Naive thymus-derived CD4-positive, alpha-beta T cell (primary cell): ENCODE measurements at regions of chr11 and their contacts with region 1.

Region 1: GRCh38 chr11:128412847-128413791 is 174.2 kb downstream of the ETS1 start:
- DNase-seq: no peak
- ATAC-seq: no peak
- H3K4me3 ChIP-seq: no peak overlapping the region
- H3K4me3 Mint-ChIP-seq: peak overlapping the region in 6 of 10 donors; percentile 12 to 69 (median 58)
- H3K27ac ChIP-seq: no peak overlapping the region
- H3K27ac Mint-ChIP-seq: peak overlapping the region; percentile 30 to 95 (median 82)
- H3K4me1 ChIP-seq: peaks cover 0 to 37% of the 10 kb centered on the region in 2 donors
- H3K4me1 Mint-ChIP-seq: peaks cover 23 to 85% (median 77%) of the 10 kb centered on the region in 7 donors
- H3K27me3 ChIP-seq: no peaks in the 10 kb centered on the region
- H3K27me3 Mint-ChIP-seq: no peaks in the 10 kb centered on the region

Region 2: GRCh38 chr11:128365044-128365443 is 48.1 kb before region 1 on chr11:
- CTCF ChIA-PET with region 1: no interaction called
- POLR2A ChIA-PET with region 1: no interaction called
- intact Hi-C with region 1: loop called in 1 of 2 experiments (anchors 2 kb)
- DNase-seq: peak in 5 of 9 donors; percentile 17 to 48 (median 45)
- ATAC-seq: no peak
- H3K4me3 ChIP-seq: no peak overlapping the region
- H3K4me3 Mint-ChIP-seq: no peak overlapping the region
- H3K27ac ChIP-seq: no peak overlapping the region
- H3K27ac Mint-ChIP-seq: peak overlapping the region in 2 of 9 donors; percentile 40 to 85
- H3K4me1 ChIP-seq: no peaks in the 10 kb centered on the region
- H3K4me1 Mint-ChIP-seq: peaks cover 8 to 47% (median 37%) of the 10 kb centered on the region in 7 donors
- H3K27me3 ChIP-seq: no peaks in the 10 kb centered on the region
- H3K27me3 Mint-ChIP-seq: peaks cover 0 to 5% (median 0%) of the 10 kb centered on the region in 5 donors

Region 3: GRCh38 chr11:128372977-128373376 is 40.1 kb before region 1 on chr11:
- CTCF ChIA-PET with region 1: no interaction called
- POLR2A ChIA-PET with region 1: no interaction called
- intact Hi-C with region 1: loop called in 1 of 2 experiments (anchors 5 kb)
- DNase-seq: no peak
- ATAC-seq: no peak
- H3K4me3 ChIP-seq: no peak overlapping the region
- H3K4me3 Mint-ChIP-seq: no peak overlapping the region
- H3K27ac ChIP-seq: no peak overlapping the region
- H3K27ac Mint-ChIP-seq: no peak overlapping the region
- H3K4me1 ChIP-seq: peaks cover 0 to 11% of the 10 kb centered on the region in 2 donors
- H3K4me1 Mint-ChIP-seq: peaks cover 9 to 69% (median 48%) of the 10 kb centered on the region in 7 donors
- H3K27me3 ChIP-seq: no peaks in the 10 kb centered on the region
- H3K27me3 Mint-ChIP-seq: peaks cover 0 to 2% (median 0%) of the 10 kb centered on the region in 5 donors

Region 4: GRCh38 chr11:128399251-128400121 is 13.6 kb before region 1 on chr11:
- CTCF ChIA-PET with region 1: no interaction called
- POLR2A ChIA-PET with region 1: interaction called, 20 read pairs
- intact Hi-C with region 1: loop called in 1 of 2 experiments (anchors 1 kb)
- DNase-seq: no peak
- ATAC-seq: peak; percentile 10
- H3K4me3 ChIP-seq: no peak overlapping the region
- H3K4me3 Mint-ChIP-seq: no peak overlapping the region
- H3K27ac ChIP-seq: peak overlapping the region; percentile 18
- H3K27ac Mint-ChIP-seq: peak overlapping the region in 3 of 9 donors; percentile 64 to 77 (median 67)
- H3K4me1 ChIP-seq: peaks cover 0 to 9% of the 10 kb centered on the region in 2 donors
- H3K4me1 Mint-ChIP-seq: peaks cover 4 to 47% (median 36%) of the 10 kb centered on the region in 7 donors
- H3K27me3 ChIP-seq: no peaks in the 10 kb centered on the region
- H3K27me3 Mint-ChIP-seq: peaks cover 0 to 3% (median 0%) of the 10 kb centered on the region in 5 donors

Region 5: GRCh38 chr11:128568166-128568778 is 155.2 kb after region 1 on chr11:
- CTCF ChIA-PET with region 1: no interaction called
- POLR2A ChIA-PET with region 1: no interaction called
- intact Hi-C with region 1: no loop called
- DNase-seq: no peak
- ATAC-seq: peak; percentile 55
- H3K4me3 ChIP-seq: no peak overlapping the region
- H3K4me3 Mint-ChIP-seq: peak overlapping the region in 2 of 10 donors; percentile 11 to 18
- H3K27ac ChIP-seq: no peak overlapping the region
- H3K27ac Mint-ChIP-seq: peak overlapping the region in 5 of 9 donors; percentile 5 to 71 (median 58)
- H3K4me1 ChIP-seq: peaks cover 0 to 13% of the 10 kb centered on the region in 2 donors
- H3K4me1 Mint-ChIP-seq: peaks cover 14 to 33% (median 22%) of the 10 kb centered on the region in 7 donors
- H3K27me3 ChIP-seq: no peaks in the 10 kb centered on the region
- H3K27me3 Mint-ChIP-seq: no peaks in the 10 kb centered on the region